Transverse colon (tissue), 4 donors: ENCODE measurements at regions of chr12 and their contacts with region 1.

Region 1: GRCh38 chr12:5796171-5796958 is 148.7 kb downstream of the ANO2 start:
- DNase-seq: peak; percentile 53
- H3K4me3 ChIP-seq: no peak overlapping the region
- H3K27ac ChIP-seq: no peak overlapping the region
- H3K4me1 ChIP-seq: no peaks in the 10 kb centered on the region
- H3K27me3 ChIP-seq: no peaks in the 10 kb centered on the region
- CTCF ChIP-seq: peak; percentile 61 to 91 (median 73)
- EP300 ChIP-seq: no peak
- POLR2A ChIP-seq: no peak

Region 2: GRCh38 chr12:5171701-5172100 is 624.7 kb before region 1 on chr12:
- in situ Hi-C with region 1: loop called in 1 of 4 experiments (anchors 25 kb)
- intact Hi-C with region 1: no loop called
- DNase-seq: peak; percentile 13
- H3K4me3 ChIP-seq: no peak overlapping the region
- H3K27ac ChIP-seq: no peak overlapping the region
- H3K4me1 ChIP-seq: no peaks in the 10 kb centered on the region
- H3K27me3 ChIP-seq: no peaks in the 10 kb centered on the region
- CTCF ChIP-seq: peak; percentile 47 to 58 (median 54)
- EP300 ChIP-seq: no peak
- POLR2A ChIP-seq: no peak

Region 3: GRCh38 chr12:5200278-5201087 is 595.9 kb before region 1 on chr12:
- in situ Hi-C with region 1: loop called in 1 of 4 experiments (anchors 25 kb)
- intact Hi-C with region 1: no loop called
- DNase-seq: peak; percentile 46
- H3K4me3 ChIP-seq: no peak overlapping the region
- H3K27ac ChIP-seq: no peak overlapping the region
- H3K4me1 ChIP-seq: no peaks in the 10 kb centered on the region
- H3K27me3 ChIP-seq: no peaks in the 10 kb centered on the region
- CTCF ChIP-seq: peak; percentile 56 to 68 (median 66)
- EP300 ChIP-seq: no peak
- POLR2A ChIP-seq: no peak

Region 4: DNA sequence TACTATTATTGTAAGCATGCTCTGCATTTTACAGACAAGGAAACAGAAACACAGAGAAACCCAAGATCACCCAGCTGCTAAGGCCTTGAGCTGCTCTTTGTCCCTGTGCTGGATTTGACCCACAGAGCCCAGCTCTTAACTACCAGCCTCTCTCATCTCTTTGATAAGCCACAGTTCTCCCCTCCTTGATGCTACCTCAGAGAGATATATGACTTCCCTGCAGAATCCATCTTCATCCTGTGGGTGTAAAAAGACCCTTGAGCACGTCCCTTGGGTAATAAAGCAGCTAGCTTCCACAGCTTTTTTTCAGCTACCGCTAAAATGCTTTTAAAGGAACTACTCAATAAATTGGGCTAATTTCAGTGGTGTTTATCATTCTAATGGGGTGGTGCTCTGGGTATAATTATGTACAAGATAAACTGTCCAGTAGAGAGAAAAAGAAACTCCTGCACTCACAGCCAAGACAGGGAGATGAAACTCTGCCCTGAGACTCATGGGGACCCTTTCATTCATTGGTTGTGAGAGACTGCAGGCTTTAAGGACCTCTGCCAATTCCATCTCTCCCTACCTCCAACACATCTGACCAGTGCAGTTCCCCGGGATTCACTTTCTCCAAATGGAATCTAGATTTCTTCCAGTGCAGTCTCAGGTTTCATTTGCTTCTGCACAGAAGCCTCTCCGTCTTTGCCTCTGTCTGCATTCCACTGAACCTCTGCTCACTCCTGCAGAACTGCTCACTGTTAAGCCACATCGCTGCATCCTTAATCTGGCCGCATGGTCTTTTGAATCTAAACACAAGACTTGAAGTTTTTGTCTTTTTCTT is 389.1 kb before region 1 on chr12:
- in situ Hi-C with region 1: loop called in 1 of 4 experiments (anchors 25 kb)
- intact Hi-C with region 1: no loop called
- DNase-seq: no peak
- H3K4me3 ChIP-seq: no peak overlapping the region
- H3K27ac ChIP-seq: no peak overlapping the region
- H3K4me1 ChIP-seq: no peaks in the 10 kb centered on the region
- H3K27me3 ChIP-seq: peaks cover 8% of the 10 kb centered on the region
- CTCF ChIP-seq: no peak
- EP300 ChIP-seq: no peak
- POLR2A ChIP-seq: no peak

Region 5: GRCh38 chr12:5428332-5429221 is 367.8 kb before region 1 on chr12:
- in situ Hi-C with region 1: loop called (anchors 10 to 25 kb)
- intact Hi-C with region 1: no loop called
- DNase-seq: no peak
- H3K4me3 ChIP-seq: no peak overlapping the region
- H3K27ac ChIP-seq: no peak overlapping the region
- H3K4me1 ChIP-seq: peaks cover 12 to 28% (median 18%) of the 10 kb centered on the region in 4 donors
- H3K27me3 ChIP-seq: peaks cover 60% of the 10 kb centered on the region
- CTCF ChIP-seq: peak; percentile 27 to 55 (median 45)
- EP300 ChIP-seq: no peak
- POLR2A ChIP-seq: no peak

Region 6: GRCh38 chr12:5442251-5443006 is 353.9 kb before region 1 on chr12:
- in situ Hi-C with region 1: loop called in 2 of 4 experiments (anchors 25 kb)
- intact Hi-C with region 1: no loop called
- DNase-seq: no peak
- H3K4me3 ChIP-seq: no peak overlapping the region
- H3K27ac ChIP-seq: no peak overlapping the region
- H3K4me1 ChIP-seq: peaks cover 0 to 9% (median 2%) of the 10 kb centered on the region in 4 donors
- H3K27me3 ChIP-seq: no peaks in the 10 kb centered on the region
- CTCF ChIP-seq: peak; percentile 39 to 64 (median 58)
- EP300 ChIP-seq: no peak
- POLR2A ChIP-seq: no peak